CD4-positive, alpha-beta memory T cell (primary cell): ENCODE measurements at regions of chr12 and their contacts with region 1.

Region 1: GRCh38 chr12:38884666-38885065 is 20.7 kb downstream of the CPNE8 start:
- DNase-seq: no peak
- H3K4me3 ChIP-seq: no peak overlapping the region
- H3K4me3 Mint-ChIP-seq: no peak overlapping the region
- H3K27ac ChIP-seq: no peak overlapping the region
- H3K27ac Mint-ChIP-seq: no peak overlapping the region
- H3K4me1 ChIP-seq: no peaks in the 10 kb centered on the region
- H3K4me1 Mint-ChIP-seq: peaks cover 0 to 5% (median 1%) of the 10 kb centered on the region in 4 donors
- H3K27me3 ChIP-seq: no peaks in the 10 kb centered on the region
- H3K27me3 Mint-ChIP-seq: no peaks in the 10 kb centered on the region

Region 2: GRCh38 chr12:38921025-38921677 is 36.5 kb after region 1 on chr12:
- CTCF ChIA-PET with region 1: interaction called, 3 read pairs
- POLR2A ChIA-PET with region 1: no interaction called
- intact Hi-C with region 1: loop called (anchors 1 kb)
- DNase-seq: peak in 3 of 5 donors; percentile 12 to 25 (median 14)
- H3K4me3 ChIP-seq: no peak overlapping the region
- H3K4me3 Mint-ChIP-seq: no peak overlapping the region
- H3K27ac ChIP-seq: no peak overlapping the region
- H3K27ac Mint-ChIP-seq: no peak overlapping the region
- H3K4me1 ChIP-seq: no peaks in the 10 kb centered on the region
- H3K4me1 Mint-ChIP-seq: peaks cover 0 to 2% (median 0%) of the 10 kb centered on the region in 4 donors
- H3K27me3 ChIP-seq: no peaks in the 10 kb centered on the region
- H3K27me3 Mint-ChIP-seq: no peaks in the 10 kb centered on the region

Region 3: GRCh38 chr12:38983117-38983902 is 98.6 kb after region 1 on chr12:
- CTCF ChIA-PET with region 1: no interaction called
- POLR2A ChIA-PET with region 1: no interaction called
- intact Hi-C with region 1: no loop called
- DNase-seq: no peak
- H3K4me3 ChIP-seq: no peak overlapping the region
- H3K4me3 Mint-ChIP-seq: no peak overlapping the region
- H3K27ac ChIP-seq: no peak overlapping the region
- H3K27ac Mint-ChIP-seq: no peak overlapping the region
- H3K4me1 ChIP-seq: no peaks in the 10 kb centered on the region
- H3K4me1 Mint-ChIP-seq: no peaks in the 10 kb centered on the region
- H3K27me3 ChIP-seq: no peaks in the 10 kb centered on the region
- H3K27me3 Mint-ChIP-seq: peaks cover 0 to 2% of the 10 kb centered on the region in 2 donors